RWPE1 (cell line): ENCODE measurements at regions of chr14 and their contacts with region 1.

Region 1: DNA sequence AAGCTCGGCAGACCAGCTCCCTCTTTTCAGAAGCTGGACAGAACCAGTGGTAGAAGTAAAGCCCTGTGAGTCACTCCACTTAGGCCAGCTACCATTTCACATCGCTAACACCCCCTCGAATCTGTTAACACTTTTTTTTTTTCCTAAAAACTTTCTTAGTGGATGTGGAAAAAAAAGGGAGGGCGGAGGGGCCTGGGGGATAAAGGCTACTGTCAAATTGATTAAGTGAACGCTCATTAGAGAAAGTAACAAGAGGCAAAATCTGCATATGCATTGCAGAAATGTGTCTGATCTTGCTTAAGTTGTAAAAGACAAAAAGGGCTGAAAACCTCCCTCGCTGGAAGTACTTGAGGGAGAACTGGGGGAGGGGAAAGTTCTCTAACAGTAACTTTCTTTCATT is 86.6 kb upstream of the OTX2 start:
- DNase-seq: no peak
- H3K27ac ChIP-seq: no peak overlapping the region
- CTCF ChIP-seq: no peak

Region 2: GRCh38 chr14:56989372-56989771 is 92.5 kb after region 1 on chr14:
- CTCF ChIA-PET with region 1: interaction called, 10 read pairs
- POLR2A ChIA-PET with region 1: no interaction called
- DNase-seq: no peak
- H3K27ac ChIP-seq: no peak overlapping the region
- CTCF ChIP-seq: no peak